ENCODE measurements at regions of chr9 and their contacts with region 1.

Region 1: DNA sequence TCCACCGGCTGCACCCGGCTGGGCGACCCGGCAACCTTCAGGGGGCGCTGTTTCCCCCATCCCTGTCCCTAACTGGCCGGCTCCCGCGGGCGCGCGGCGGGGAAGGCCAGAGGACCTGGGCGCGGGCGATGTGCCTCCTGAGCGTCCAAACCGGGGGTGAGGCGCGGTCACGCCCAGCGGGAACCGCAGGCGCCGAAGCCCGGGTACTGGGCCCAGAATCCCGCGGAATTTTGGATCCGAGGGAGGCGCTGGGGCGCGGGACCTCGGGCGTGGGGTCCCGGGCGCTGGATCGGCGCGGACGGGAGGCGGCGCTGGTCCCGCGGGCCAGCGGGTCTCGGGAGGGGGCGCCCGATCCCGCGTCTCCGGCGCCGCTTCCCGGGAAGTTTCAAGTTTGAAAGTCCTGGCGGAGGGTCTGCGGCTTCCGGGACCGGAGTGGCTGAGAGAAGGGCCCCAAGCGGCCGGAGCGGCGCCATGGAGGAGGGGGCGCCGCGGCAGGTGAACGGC is at the start of gene PKN3:
- DNase-seq: peak; percentile 93
- total RNA-seq, gene PKN3: 6.2 TPM

Region 2: GRCh38 chr9:128607642-128608350 is 94.7 kb before region 1 on chr9:
- intact Hi-C with region 1: no loop called
- DNase-seq: peak; percentile 82

Region 3: DNA sequence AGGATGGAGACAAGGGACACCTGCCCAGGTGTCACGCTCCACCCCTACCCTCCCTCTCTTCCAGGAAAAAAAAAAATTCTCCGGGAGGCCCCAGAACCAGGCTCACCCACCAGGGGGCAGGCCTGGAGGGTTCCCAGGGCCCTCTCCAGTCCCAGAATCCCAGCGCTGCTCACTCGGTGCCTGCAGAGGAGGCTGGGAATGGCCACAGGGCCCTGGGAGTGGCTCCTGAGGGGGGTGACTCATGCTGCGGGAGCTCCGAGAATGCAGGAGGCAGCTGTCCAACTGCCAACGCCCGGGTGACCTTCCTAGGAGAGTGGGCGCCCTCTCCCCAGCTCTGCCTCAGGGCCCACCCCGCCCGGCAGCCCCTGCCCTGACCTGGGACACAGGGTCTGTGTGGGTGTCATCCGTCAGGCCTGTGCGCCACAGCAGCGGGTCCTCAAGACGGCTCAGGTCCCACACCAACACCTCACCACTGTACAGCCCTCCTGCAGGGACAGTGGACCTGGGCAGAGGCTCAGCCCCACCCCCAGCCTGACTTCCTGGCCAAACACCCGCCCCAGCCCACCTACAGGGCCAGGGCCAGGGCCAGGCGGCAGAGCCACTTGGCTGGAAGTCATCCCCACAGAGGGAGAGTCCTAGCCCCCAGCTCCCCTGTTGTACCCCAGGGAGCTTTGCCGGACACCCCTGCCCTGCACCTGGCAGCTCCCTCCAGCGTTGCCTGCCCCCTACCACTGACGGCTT is 67.0 kb before region 1 on chr9:
- intact Hi-C with region 1: loop called (anchors 5 kb)
- DNase-seq: peak; percentile 92

Region 4: DNA sequence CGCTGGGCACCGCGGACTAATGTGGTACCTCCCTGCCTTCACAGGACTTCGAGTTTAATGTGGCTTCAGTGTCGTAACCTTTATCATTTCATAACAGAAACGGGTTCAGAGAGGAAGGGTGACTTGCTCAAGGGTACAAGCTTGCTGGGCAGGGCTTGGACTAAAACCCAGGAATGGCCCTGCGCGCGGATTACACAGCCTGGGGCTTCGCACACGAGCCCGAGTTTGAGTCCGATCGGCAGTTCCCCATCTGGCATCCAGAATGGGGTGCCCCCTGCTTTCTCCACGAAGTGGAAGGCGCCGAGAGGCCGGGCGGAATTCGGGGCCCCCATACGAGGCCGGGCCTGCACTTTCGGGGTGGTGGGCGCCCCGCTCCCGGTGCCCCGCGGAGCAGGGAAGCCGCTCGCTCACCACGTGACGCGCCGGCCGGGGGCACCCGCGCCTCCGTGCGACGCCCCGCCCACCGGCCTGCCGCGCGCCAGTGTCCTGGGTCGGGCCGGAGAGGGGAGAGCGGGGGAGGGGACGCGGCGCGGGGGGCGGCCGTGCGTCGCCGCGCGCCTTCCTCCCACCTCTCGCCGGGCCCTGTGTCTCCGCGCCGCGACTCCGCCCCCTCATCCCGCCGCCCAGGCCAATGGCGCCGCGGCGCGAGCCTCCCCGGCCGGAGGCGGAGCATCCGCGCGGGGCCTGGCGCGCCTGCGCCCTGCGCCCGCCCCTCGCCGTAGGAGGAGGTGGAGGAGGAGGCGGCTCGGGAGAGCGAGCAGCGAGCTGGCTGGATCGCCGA is 13.8 kb before region 1 on chr9 and contains the start of gene SET:
- intact Hi-C with region 1: loop called (anchors 2 kb)
- DNase-seq: peak; percentile 96
- total RNA-seq, gene SET: 212 TPM

Region 5: GRCh38 chr9:128818099-128818838 is 115.8 kb after region 1 on chr9 and contains the start of gene ENDOG:
- intact Hi-C with region 1: loop called (anchors 5 kb)
- DNase-seq: peak; percentile 99
- total RNA-seq, gene ENDOG: 47.1 TPM

Measured in cardiac septum (tissue), 1 donor.